CD8-positive, alpha-beta T cell (primary cell): ENCODE measurements at regions of chr7 and their contacts with region 1.

Region 1: GRCh38 chr7:36639826-36640225 is 84.5 kb downstream of the AOAH start:
- DNase-seq: peak; percentile 21 to 86 (median 62)
- ATAC-seq: peak; percentile 87
- H3K4me3 ChIP-seq: peak overlapping the region in 1 of 2 experiments; percentile 7
- H3K4me3 Mint-ChIP-seq: peak overlapping the region; percentile 60
- H3K27ac ChIP-seq: peak overlapping the region; percentile 65 to 80
- H3K27ac Mint-ChIP-seq: peak overlapping the region; percentile 95
- H3K4me1 ChIP-seq: peaks cover 75% of the 10 kb centered on the region
- H3K4me1 Mint-ChIP-seq: peaks cover 95% of the 10 kb centered on the region
- H3K27me3 ChIP-seq: no peaks in the 10 kb centered on the region
- H3K27me3 Mint-ChIP-seq: no peaks in the 10 kb centered on the region
- CTCF ChIP-seq: no peak

Region 2: GRCh38 chr7:36605261-36606051 is 34.4 kb before region 1 on chr7:
- CTCF ChIA-PET with region 1: interaction called, 4 read pairs
- POLR2A ChIA-PET with region 1: interaction called, 7 read pairs
- intact Hi-C with region 1: loop called in 1 of 2 experiments (anchors 2 kb)
- DNase-seq: no peak
- ATAC-seq: no peak
- H3K4me3 ChIP-seq: no peak overlapping the region
- H3K4me3 Mint-ChIP-seq: peak overlapping the region; percentile 30
- H3K27ac ChIP-seq: no peak overlapping the region
- H3K27ac Mint-ChIP-seq: peak overlapping the region; percentile 91
- H3K4me1 ChIP-seq: peaks cover 44% of the 10 kb centered on the region
- H3K4me1 Mint-ChIP-seq: peaks cover 77% of the 10 kb centered on the region
- H3K27me3 ChIP-seq: no peaks in the 10 kb centered on the region
- H3K27me3 Mint-ChIP-seq: no peaks in the 10 kb centered on the region
- CTCF ChIP-seq: no peak

Region 3: DNA sequence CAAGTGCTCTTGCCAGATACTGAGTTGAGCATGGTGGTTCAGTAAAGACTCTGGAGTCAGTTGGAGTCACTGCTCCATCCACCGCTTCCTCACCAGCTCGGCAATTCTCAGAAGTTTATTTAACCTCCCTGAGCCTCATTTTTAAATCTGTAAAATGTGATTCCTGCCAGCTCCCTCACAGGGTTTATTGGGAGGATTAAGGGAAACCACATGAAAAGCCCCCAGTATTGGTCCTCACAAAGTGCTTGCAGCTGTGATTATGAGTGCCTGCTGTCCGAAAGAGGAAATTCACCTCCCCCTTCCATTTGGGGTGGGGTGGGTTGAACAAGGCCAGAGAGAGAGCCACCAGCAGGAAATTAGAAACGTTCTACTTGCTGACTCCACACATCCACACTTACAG is 14.6 kb before region 1 on chr7:
- CTCF ChIA-PET with region 1: interaction called, 8 read pairs
- POLR2A ChIA-PET with region 1: interaction called, 30 read pairs
- intact Hi-C with region 1: no loop called
- DNase-seq: no peak
- ATAC-seq: no peak
- H3K4me3 ChIP-seq: no peak overlapping the region
- H3K4me3 Mint-ChIP-seq: no peak overlapping the region
- H3K27ac ChIP-seq: peak overlapping the region in 1 of 2 experiments; percentile 58
- H3K27ac Mint-ChIP-seq: peak overlapping the region; percentile 46
- H3K4me1 ChIP-seq: peaks cover 8% of the 10 kb centered on the region
- H3K4me1 Mint-ChIP-seq: peaks cover 42% of the 10 kb centered on the region
- H3K27me3 ChIP-seq: no peaks in the 10 kb centered on the region
- H3K27me3 Mint-ChIP-seq: no peaks in the 10 kb centered on the region
- CTCF ChIP-seq: no peak

Region 4: DNA sequence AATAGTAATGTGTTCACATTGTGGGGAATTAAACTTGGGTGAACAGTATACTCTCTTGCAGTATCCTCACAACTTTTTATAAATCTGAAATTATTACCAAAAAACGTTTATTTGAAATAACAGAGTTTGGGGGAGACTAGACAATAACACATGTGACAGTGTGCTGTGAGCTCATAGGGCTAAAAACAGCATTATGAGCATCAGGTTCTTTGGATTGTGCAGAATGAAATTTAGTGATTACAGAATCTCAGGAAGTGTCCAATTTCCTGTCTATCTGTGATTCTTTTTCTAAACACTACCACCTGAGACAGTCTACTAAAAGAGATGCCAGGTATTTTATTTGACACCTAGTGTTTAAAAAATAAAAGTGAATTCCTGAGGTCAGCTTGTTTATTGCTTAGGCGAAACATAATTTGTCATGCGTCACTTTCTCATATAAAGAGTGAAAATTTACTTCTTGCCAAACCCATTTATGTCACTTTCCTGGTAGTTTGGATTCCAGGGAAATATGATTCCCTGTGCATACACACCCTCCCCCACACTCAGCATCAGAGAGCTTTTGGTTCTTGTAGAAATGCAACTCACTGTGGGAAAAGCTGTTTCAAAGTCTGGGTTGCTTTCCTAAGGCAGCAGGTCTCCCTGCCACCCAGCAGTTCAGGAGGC is 13.3 kb after region 1 on chr7:
- CTCF ChIA-PET with region 1: interaction called, 9 read pairs
- POLR2A ChIA-PET with region 1: interaction called, 15 read pairs
- intact Hi-C with region 1: no loop called
- DNase-seq: no peak
- ATAC-seq: no peak
- H3K4me3 ChIP-seq: no peak overlapping the region
- H3K4me3 Mint-ChIP-seq: no peak overlapping the region
- H3K27ac ChIP-seq: peak overlapping the region in 1 of 2 experiments; percentile 20
- H3K27ac Mint-ChIP-seq: peak overlapping the region; percentile 77
- H3K4me1 ChIP-seq: peaks cover 14% of the 10 kb centered on the region
- H3K4me1 Mint-ChIP-seq: peaks cover 64% of the 10 kb centered on the region
- H3K27me3 ChIP-seq: no peaks in the 10 kb centered on the region
- H3K27me3 Mint-ChIP-seq: no peaks in the 10 kb centered on the region
- CTCF ChIP-seq: no peak

Region 5: GRCh38 chr7:36670585-36671431 is 31.0 kb after region 1 on chr7:
- CTCF ChIA-PET with region 1: interaction called, 34 read pairs
- POLR2A ChIA-PET with region 1: interaction called, 8 read pairs
- intact Hi-C with region 1: loop called in 1 of 2 experiments (anchors 2 kb)
- DNase-seq: peak; percentile 43 to 88 (median 72)
- ATAC-seq: peak; percentile 94
- H3K4me3 ChIP-seq: no peak overlapping the region
- H3K4me3 Mint-ChIP-seq: peak overlapping the region; percentile 16
- H3K27ac ChIP-seq: no peak overlapping the region
- H3K27ac Mint-ChIP-seq: peak overlapping the region; percentile 73
- H3K4me1 ChIP-seq: peaks cover 20% of the 10 kb centered on the region
- H3K4me1 Mint-ChIP-seq: peaks cover 39% of the 10 kb centered on the region
- H3K27me3 ChIP-seq: no peaks in the 10 kb centered on the region
- H3K27me3 Mint-ChIP-seq: no peaks in the 10 kb centered on the region
- CTCF ChIP-seq: peak; percentile 89

Region 6: GRCh38 chr7:36677769-36678437 is 38.1 kb after region 1 on chr7:
- CTCF ChIA-PET with region 1: interaction called, 7 read pairs
- POLR2A ChIA-PET with region 1: interaction called, 18 read pairs
- intact Hi-C with region 1: no loop called
- DNase-seq: peak in 3 of 9 experiments; percentile 31 to 64 (median 32)
- ATAC-seq: peak; percentile 59
- H3K4me3 ChIP-seq: peak overlapping the region in 1 of 2 experiments; percentile 24
- H3K4me3 Mint-ChIP-seq: peak overlapping the region; percentile 70
- H3K27ac ChIP-seq: peak overlapping the region; percentile 15 to 75
- H3K27ac Mint-ChIP-seq: peak overlapping the region; percentile 91
- H3K4me1 ChIP-seq: peaks cover 32% of the 10 kb centered on the region
- H3K4me1 Mint-ChIP-seq: peaks cover 63% of the 10 kb centered on the region
- H3K27me3 ChIP-seq: no peaks in the 10 kb centered on the region
- H3K27me3 Mint-ChIP-seq: no peaks in the 10 kb centered on the region
- CTCF ChIP-seq: no peak